B cell (primary cell): ENCODE measurements at regions of chr9 and their contacts with region 1.

Region 1: DNA sequence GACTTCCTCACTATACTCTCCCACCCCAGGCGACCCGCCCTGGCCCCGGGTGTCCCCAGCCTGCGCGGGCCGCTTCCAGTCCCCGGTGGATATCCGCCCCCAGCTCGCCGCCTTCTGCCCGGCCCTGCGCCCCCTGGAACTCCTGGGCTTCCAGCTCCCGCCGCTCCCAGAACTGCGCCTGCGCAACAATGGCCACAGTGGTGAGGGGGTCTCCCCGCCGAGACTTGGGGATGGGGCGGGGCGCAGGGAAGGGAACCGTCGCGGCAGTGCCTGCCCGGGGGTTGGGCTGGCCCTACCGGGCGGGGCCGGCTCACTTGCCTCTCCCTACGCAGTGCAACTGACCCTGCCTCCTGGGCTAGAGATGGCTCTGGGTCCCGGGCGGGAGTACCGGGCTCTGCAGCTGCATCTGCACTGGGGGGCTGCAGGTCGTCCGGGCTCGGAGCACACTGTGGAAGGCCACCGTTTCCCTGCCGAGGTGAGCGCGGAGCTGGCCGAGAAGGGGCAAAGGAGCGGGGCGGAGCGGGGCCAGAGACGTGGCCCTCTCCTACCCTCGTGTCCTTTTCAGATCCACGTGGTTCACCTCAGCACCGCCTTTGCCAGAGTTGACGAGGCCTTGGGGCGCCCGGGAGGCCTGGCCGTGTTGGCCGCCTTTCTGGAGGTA is 2.1 kb downstream of the CA9 start:
- DNase-seq: peak; percentile 55
- ATAC-seq: peak; percentile 71
- H3K4me3 ChIP-seq: peak overlapping the region in 4 of 5 experiments; percentile 47 to 60 (median 52)
- H3K4me3 Mint-ChIP-seq: peak overlapping the region; percentile 87
- H3K27ac ChIP-seq: no peak overlapping the region
- H3K27ac Mint-ChIP-seq: no peak overlapping the region
- H3K4me1 ChIP-seq: peaks cover 21 to 29% of the 10 kb centered on the region in 2 donors
- H3K4me1 Mint-ChIP-seq: peaks cover 29% of the 10 kb centered on the region
- H3K27me3 ChIP-seq: peaks cover 0 to 14% (median 3%) of the 10 kb centered on the region in 4 experiments
- H3K27me3 Mint-ChIP-seq: peaks cover 9% of the 10 kb centered on the region
- CTCF ChIP-seq: no peak

Region 2: DNA sequence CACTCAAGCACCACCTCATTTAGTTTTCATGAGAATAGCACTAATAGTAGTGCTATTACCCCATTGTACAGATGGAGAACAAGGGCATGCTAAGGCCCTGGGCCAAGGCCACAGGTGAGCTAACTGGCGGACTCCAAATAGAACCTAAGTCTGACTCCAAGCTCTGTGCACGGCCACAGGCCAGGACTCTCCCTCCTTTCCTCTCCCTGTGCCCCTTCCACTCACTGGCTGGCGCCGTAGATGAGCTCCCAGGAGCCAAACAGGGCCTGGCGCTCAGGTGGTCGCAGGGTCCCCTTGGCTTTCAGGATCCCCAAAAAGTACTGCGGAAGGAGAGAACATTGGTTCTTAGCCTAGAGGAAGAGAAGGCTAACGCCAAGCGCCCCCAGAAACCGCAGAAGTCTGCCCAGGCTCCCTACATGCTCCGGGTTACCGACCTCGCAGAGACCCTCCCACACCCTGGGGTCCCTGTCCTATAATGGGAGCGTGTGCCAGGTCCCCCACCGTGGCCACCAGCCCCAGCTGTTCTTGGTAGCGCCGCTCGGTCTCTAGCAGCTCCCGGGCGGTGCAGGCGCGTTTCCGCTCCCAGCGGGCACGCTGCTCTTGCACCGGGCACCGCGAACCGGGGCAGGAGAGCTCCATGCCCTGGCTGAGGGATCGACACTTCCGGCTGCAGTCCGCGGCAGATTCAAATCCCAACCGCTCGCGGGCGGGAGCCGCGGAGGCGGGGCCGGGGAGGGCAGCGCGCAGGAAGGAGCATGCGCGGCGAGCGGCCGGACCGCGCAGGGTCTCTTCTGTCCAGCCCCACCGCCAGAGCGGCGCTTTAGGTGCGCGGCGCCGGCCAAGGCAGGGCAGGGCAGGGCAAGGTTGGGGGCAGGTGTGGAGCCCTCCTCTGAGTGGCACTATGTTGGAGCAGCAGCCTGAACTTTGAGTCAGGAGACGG is 11.1 kb before region 1 on chr9 and contains the start of gene ARHGEF39:
- CTCF ChIA-PET with region 1: interaction called, 12 read pairs
- POLR2A ChIA-PET with region 1: interaction called, 3 read pairs
- intact Hi-C with region 1: no loop called
- DNase-seq: peak; percentile 62
- ATAC-seq: peak; percentile 78
- H3K4me3 ChIP-seq: peak within 1 kb of the TSS; percentile 50 to 78 (median 60)
- H3K4me3 Mint-ChIP-seq: peak within 1 kb of the TSS; percentile 88
- H3K27ac ChIP-seq: peak within 1 kb of the TSS in 1 of 2 donors; percentile 2
- H3K27ac Mint-ChIP-seq: peak within 1 kb of the TSS; percentile 55
- H3K4me1 ChIP-seq: peaks cover 38 to 57% of the 10 kb centered on the region in 2 donors
- H3K4me1 Mint-ChIP-seq: peaks cover 61% of the 10 kb centered on the region
- H3K27me3 ChIP-seq: no peaks in the 10 kb centered on the region
- H3K27me3 Mint-ChIP-seq: no peaks in the 10 kb centered on the region
- CTCF ChIP-seq: no peak
- total RNA-seq, gene ARHGEF39: 0.53 and 0.62 TPM in 2 replicates

Region 3: GRCh38 chr9:36036780-36037548 is 361.1 kb after region 1 on chr9 and contains the start of gene RECK:
- CTCF ChIA-PET with region 1: no interaction called
- POLR2A ChIA-PET with region 1: no interaction called
- intact Hi-C with region 1: no loop called
- DNase-seq: peak; percentile 88
- ATAC-seq: peak; percentile 98
- H3K4me3 ChIP-seq: peak within 1 kb of the TSS; percentile 52 to 82 (median 74)
- H3K4me3 Mint-ChIP-seq: peak within 1 kb of the TSS; percentile 88
- H3K27ac ChIP-seq: peak within 1 kb of the TSS in 1 of 2 donors; percentile 55
- H3K27ac Mint-ChIP-seq: peak within 1 kb of the TSS; percentile 76
- H3K4me1 ChIP-seq: peaks cover 19 to 21% of the 10 kb centered on the region in 2 donors
- H3K4me1 Mint-ChIP-seq: peaks cover 25% of the 10 kb centered on the region
- H3K27me3 ChIP-seq: peaks cover 0 to 3% (median 0%) of the 10 kb centered on the region in 4 experiments
- H3K27me3 Mint-ChIP-seq: no peaks in the 10 kb centered on the region
- CTCF ChIP-seq: no peak
- total RNA-seq, gene RECK: 7.7 and 7.9 TPM in 2 replicates